ENCODE measurements at regions of chr9 and their contacts with region 1.

Region 1: DNA sequence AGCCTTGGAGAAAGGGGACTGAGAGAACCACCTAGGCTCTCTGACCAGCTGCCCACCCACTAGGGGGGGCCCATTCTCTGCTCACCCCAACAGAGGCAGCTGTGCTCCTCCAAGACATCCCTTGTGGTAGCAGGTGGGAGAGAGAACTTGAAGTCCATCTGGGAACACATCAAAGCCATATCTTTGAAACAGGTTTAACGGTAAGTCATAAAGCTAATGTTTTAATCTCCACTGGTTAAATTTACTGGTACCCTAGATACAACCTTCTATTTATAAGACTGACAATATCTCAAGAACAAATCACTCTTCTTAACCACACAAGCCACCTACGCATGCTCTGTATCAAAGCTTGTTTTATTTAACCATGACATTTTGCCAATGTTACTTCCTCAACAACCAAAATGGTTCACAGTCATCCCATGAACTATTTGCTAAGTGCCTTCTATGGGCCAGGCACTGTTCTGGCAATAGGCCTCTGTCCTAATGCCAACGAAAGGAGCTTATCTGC is 20.4 kb downstream of the AUH start:
- DNase-seq: no peak
- H3K4me3 ChIP-seq: no peak overlapping the region
- H3K4me3 Mint-ChIP-seq: no peak overlapping the region
- H3K27ac ChIP-seq: no peak overlapping the region
- H3K27ac Mint-ChIP-seq: peak overlapping the region in 1 of 7 donors; percentile 10
- H3K4me1 ChIP-seq: no peaks in the 10 kb centered on the region
- H3K4me1 Mint-ChIP-seq: no peaks in the 10 kb centered on the region
- H3K27me3 ChIP-seq: no peaks in the 10 kb centered on the region
- H3K27me3 Mint-ChIP-seq: peaks cover 0 to 2% (median 1%) of the 10 kb centered on the region in 3 donors
- CTCF ChIP-seq: no peak

Region 2: DNA sequence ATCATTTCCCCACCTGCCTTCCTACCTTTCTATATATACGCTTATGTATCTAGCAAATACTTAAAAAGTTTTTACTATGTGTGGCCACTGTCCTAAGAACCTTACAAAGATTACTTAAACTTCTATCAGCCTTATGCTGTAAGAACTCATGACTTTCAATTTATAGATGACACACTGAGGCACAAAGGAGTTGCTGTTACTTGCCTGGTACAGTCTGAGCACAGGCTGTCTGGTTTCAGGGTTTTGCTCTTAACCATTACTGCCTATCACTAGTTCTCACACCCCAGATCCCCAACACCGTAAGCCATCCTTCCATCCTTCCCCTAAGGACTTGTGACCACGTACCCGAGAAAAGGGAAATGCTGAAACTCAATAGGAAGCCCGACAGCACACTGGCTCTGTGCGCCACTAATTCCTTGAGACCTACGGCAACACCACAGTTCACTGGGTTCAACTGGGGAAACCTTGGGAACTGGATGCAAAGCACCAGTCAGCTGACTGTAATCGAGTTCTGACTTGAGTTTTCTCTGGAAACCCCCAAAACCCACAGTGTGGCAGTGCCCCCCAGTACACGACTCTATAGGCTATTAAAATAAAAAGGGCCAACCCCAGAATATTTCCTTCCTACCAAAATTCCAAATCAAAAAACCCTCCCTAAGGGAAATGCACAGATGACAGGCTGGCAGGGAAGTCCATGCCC is 35.5 kb before region 1 on chr9:
- intact Hi-C with region 1: loop called in 1 of 2 experiments (anchors 5 kb)
- DNase-seq: peak; percentile 17 to 52 (median 40)
- H3K4me3 ChIP-seq: no peak overlapping the region
- H3K4me3 Mint-ChIP-seq: peak overlapping the region; percentile 42 to 43
- H3K27ac ChIP-seq: no peak overlapping the region
- H3K27ac Mint-ChIP-seq: peak overlapping the region in 3 of 7 donors; percentile 4 to 69 (median 58)
- H3K4me1 ChIP-seq: peaks cover 21 to 35% of the 10 kb centered on the region in 2 donors
- H3K4me1 Mint-ChIP-seq: peaks cover 33% of the 10 kb centered on the region
- H3K27me3 ChIP-seq: no peaks in the 10 kb centered on the region
- H3K27me3 Mint-ChIP-seq: peaks cover 0 to 2% (median 1%) of the 10 kb centered on the region in 3 donors
- CTCF ChIP-seq: no peak

Measured in CD14-positive monocyte (primary cell).